HEK293 (cell line): ENCODE measurements at regions of chr17 and their contacts with region 1.

Region 1: GRCh38 chr17:35537601-35538141 is at the start of gene SLFN12L:
- H3K4me3 ChIP-seq: no peak within 1 kb of the TSS
- H3K27ac ChIP-seq: no peak within 1 kb of the TSS
- H3K4me1 ChIP-seq: peaks cover 3% of the 10 kb centered on the region; the same call in 1 of the 2 replicates
- CTCF ChIP-seq: no peak

Region 2: DNA sequence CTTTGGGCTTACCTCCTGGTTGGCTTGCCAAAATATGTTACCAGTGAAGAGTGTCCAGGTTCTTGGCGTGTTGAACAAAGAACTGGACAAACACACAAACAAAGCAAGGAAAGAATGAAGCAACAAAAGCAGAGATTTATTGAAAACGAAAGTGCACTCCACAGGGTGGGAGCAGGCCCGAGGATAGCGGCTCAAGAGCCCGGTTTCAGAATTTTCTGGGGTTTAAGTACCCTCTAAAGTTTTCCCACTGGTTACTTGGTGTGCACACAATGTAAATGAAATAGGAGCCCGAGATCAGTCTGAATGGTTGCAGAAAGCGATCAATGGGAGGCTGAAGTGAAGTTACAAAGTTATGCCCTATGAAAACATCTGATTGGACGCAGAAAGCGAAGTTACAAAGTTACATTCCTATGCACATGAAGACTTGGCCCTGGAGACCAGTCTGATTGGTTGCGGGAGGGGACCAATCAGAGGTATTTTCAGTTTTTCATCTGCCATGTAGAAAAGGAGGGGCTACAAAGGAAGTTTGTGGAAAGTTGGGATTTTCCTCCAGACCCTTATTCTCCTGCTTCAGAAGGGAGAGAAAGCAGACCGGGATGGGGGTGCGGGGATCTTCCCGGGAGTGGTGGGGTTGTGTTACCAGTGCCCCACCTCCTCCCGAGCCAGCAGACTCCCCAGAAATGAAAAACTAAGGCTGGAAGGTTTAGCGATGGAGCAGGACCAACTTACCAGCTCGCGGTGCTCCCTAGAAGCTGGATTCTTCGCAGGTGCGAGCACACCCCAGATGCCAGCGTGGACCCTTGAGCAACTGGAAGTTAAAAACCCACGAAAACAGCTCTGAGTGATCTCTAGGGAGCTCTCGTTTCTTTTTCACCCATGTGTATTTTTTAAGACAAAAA is 105.2 kb before region 1 on chr17 and contains the start of gene SLFN12:
- CTCF ChIA-PET with region 1: interaction called, 15 read pairs
- POLR2A ChIA-PET with region 1: no interaction called
- H3K4me3 ChIP-seq: peak within 1 kb of the TSS; percentile 49
- H3K27ac ChIP-seq: peak within 1 kb of the TSS; percentile 83
- H3K4me1 ChIP-seq: peaks cover 14% of the 10 kb centered on the region
- CTCF ChIP-seq: no peak

Region 3: DNA sequence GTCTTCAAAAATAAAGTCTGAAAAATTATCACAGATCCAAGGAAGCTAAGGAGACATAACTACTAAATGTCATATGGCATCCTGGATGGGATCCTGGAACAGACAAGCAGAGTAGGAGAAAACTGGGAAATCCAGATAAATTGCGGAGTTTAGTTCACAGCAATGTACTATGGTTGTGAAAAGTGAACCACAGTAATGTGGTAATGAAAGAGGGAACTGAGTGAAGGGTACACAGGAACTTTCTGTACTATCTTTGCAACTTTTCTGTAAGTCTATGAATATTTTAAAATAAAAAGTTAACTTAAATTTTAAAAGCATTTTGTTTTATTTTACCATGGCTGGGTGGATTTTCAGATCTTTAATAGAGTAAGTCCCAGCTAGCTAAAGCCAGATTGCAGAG is 16.5 kb before region 1 on chr17:
- CTCF ChIA-PET with region 1: interaction called, 12 read pairs
- POLR2A ChIA-PET with region 1: no interaction called
- H3K4me3 ChIP-seq: no peak overlapping the region
- H3K27ac ChIP-seq: no peak overlapping the region
- H3K4me1 ChIP-seq: peaks cover 9% of the 10 kb centered on the region
- CTCF ChIP-seq: no peak

Region 4: DNA sequence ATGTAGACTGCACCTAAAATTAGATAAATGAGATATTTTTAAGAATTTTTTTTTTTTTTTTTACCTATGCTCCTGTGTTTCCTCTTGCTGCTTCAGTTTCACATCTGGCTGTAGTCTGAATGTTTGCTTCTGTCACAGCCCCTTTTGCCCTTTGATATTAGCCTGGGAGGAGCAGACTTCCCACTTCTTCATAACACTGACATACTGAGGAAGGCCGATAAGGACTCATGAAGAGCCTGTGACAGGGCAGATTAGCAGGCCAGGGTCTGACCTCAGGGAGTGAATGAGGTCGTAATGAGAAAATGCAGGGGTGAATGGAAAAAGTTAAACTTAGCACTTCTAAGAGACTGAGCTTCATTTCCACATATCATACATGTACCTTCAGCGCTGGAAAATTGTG is 23.0 kb after region 1 on chr17 and contains the start of gene SLFN14:
- CTCF ChIA-PET with region 1: interaction called, 10 read pairs
- POLR2A ChIA-PET with region 1: no interaction called
- H3K4me3 ChIP-seq: no peak within 1 kb of the TSS
- H3K27ac ChIP-seq: no peak within 1 kb of the TSS
- H3K4me1 ChIP-seq: no peaks in the 10 kb centered on the region
- CTCF ChIP-seq: no peak